Activated CD8-positive, alpha-beta T cell treated with anti-CD3 and anti-CD28 coated beads for 36 hours (primary cell): ENCODE measurements at regions of chr3 and their contacts with region 1.

Region 1: GRCh38 chr3:46953234-46954010 is 23.1 kb downstream of the CCDC12 start:
- DNase-seq: peak; percentile 36
- ATAC-seq: peak; percentile 28
- H3K4me3 Mint-ChIP-seq: peak overlapping the region; percentile 55
- H3K27ac Mint-ChIP-seq: peak overlapping the region; percentile 96
- H3K4me1 Mint-ChIP-seq: peaks cover 82% of the 10 kb centered on the region
- H3K27me3 Mint-ChIP-seq: no peaks in the 10 kb centered on the region
- CTCF ChIP-seq: no peak

Region 2: DNA sequence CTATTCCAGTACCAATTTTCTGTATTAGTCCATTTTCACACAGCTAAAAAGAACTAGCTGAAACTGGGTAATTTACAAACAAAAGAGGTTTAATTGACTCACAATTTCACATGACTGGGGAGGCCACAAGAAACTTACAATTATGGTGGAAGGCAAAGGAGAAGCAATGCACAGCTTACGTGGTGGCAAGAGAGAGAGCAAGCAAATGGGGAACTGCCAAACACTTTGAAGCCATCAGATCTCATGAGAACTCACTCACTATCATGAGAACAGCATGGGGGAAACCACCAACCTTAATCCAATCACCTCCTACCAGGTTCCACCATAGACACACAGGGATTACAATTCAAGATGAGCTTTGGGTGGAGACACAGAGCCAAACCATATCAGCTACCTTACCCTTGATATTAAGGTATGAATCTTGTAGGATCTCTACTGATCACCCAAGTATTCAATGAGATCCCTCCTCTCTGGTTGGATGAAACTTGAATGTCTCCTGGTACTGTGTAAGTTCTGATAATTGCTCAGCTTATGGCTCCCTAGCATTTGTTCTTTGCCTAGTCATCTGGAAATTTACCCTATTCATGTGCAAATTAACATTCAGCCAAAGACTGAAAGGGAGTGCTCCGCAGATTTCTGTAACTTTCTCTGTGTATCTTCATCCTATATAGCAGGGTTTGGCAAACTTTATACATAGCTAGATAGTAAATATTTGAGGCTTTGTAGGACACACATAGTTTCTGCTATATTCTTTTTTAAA is 129.0 kb before region 1 on chr3:
- CTCF ChIA-PET with region 1: no interaction called
- POLR2A ChIA-PET with region 1: no interaction called
- intact Hi-C with region 1: no loop called
- DNase-seq: no peak
- ATAC-seq: no peak
- H3K4me3 Mint-ChIP-seq: no peak overlapping the region
- H3K27ac Mint-ChIP-seq: no peak overlapping the region
- H3K4me1 Mint-ChIP-seq: peaks cover 3% of the 10 kb centered on the region
- H3K27me3 Mint-ChIP-seq: peaks cover 4% of the 10 kb centered on the region
- CTCF ChIP-seq: no peak

Region 3: DNA sequence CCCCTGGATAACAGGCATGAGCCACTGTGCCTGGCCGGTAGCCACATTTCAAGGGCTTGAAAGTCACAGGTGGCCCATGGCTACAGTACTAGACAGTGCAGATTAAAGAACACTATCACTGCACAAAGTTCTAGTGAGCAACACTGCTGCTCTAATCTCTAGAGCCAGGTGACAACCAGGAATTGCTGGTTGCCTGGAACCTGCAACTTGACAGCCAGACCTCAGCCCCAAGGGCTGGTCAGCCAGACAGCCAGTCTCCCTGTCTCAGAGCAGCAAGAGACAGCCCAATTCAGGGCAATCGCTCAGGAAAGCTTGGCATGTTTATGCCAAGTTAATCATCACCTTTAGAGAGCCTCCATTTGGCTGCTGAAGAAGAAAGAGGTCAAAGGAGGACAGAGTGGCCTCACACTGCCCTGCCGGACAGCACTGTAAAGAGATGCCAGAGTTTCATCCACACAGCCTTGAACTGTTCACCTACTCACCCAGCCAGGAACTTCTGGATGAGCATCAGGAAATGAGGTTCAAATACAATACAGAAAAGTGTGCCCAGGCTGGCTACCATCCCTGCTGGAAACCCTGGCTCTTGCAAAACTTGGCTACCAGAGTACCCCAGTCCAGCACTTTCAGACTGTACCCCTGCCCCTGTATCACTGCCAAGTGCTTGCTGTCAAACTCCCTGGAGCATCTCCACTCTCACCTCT is 17.1 kb after region 1 on chr3:
- CTCF ChIA-PET with region 1: interaction called, 4 read pairs
- POLR2A ChIA-PET with region 1: interaction called, 11 read pairs
- intact Hi-C with region 1: no loop called
- DNase-seq: no peak
- ATAC-seq: no peak
- H3K4me3 Mint-ChIP-seq: no peak overlapping the region
- H3K27ac Mint-ChIP-seq: peak overlapping the region; percentile 84
- H3K4me1 Mint-ChIP-seq: peaks cover 88% of the 10 kb centered on the region
- H3K27me3 Mint-ChIP-seq: no peaks in the 10 kb centered on the region
- CTCF ChIP-seq: no peak